Activated CD8-positive, alpha-beta T cell treated with anti-CD3 and anti-CD28 coated beads for 36 hours (primary cell): ENCODE measurements at regions of chr14 and their contacts with region 1.

Region 1: GRCh38 chr14:70073924-70074566 is 114.7 kb downstream of the SLC8A3 start:
- DNase-seq: peak; percentile 75
- ATAC-seq: peak; percentile 45
- H3K4me3 Mint-ChIP-seq: no peak overlapping the region
- H3K27ac Mint-ChIP-seq: no peak overlapping the region
- H3K4me1 Mint-ChIP-seq: no peaks in the 10 kb centered on the region
- H3K27me3 Mint-ChIP-seq: peaks cover 11% of the 10 kb centered on the region
- CTCF ChIP-seq: peak; percentile 84

Region 2: DNA sequence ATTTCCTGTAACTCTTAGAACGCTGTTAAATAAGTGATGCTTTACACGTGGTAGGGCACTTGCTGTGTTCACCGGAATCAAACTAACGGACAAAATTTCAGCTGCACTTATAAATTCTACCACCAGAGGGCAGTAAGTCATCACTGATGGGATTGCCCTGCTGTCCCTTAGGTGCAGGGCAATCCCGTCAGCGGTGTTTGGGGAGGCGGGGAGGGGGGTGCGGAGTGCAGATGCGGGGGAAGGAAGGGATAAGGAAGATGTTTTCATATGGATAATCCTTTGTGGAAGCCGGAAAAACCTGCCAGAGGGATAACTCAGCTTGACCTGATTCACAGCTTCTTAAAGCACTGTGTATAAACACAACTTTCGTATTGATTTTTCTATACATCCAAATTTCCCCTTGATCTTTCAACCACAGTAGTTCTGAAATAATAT is 255.3 kb before region 1 on chr14:
- CTCF ChIA-PET with region 1: interaction called, 21 read pairs
- POLR2A ChIA-PET with region 1: no interaction called
- intact Hi-C with region 1: loop called (anchors 2 kb)
- DNase-seq: peak; percentile 61
- ATAC-seq: peak; percentile 88
- H3K4me3 Mint-ChIP-seq: no peak overlapping the region
- H3K27ac Mint-ChIP-seq: no peak overlapping the region
- H3K4me1 Mint-ChIP-seq: no peaks in the 10 kb centered on the region
- H3K27me3 Mint-ChIP-seq: peaks cover 2% of the 10 kb centered on the region
- CTCF ChIP-seq: peak; percentile 67

Region 3: GRCh38 chr14:69980457-69981425 is 93.3 kb before region 1 on chr14:
- CTCF ChIA-PET with region 1: no interaction called
- POLR2A ChIA-PET with region 1: no interaction called
- intact Hi-C with region 1: no loop called
- DNase-seq: no peak
- ATAC-seq: no peak
- H3K4me3 Mint-ChIP-seq: no peak overlapping the region
- H3K27ac Mint-ChIP-seq: no peak overlapping the region
- H3K4me1 Mint-ChIP-seq: no peaks in the 10 kb centered on the region
- H3K27me3 Mint-ChIP-seq: peaks cover 17% of the 10 kb centered on the region
- CTCF ChIP-seq: no peak

Region 4: GRCh38 chr14:70027785-70028428 is 46.1 kb before region 1 on chr14:
- CTCF ChIA-PET with region 1: interaction called, 14 read pairs
- POLR2A ChIA-PET with region 1: no interaction called
- intact Hi-C with region 1: no loop called
- DNase-seq: peak; percentile 81
- ATAC-seq: peak; percentile 89
- H3K4me3 Mint-ChIP-seq: no peak overlapping the region
- H3K27ac Mint-ChIP-seq: no peak overlapping the region
- H3K4me1 Mint-ChIP-seq: no peaks in the 10 kb centered on the region
- H3K27me3 Mint-ChIP-seq: peaks cover 2% of the 10 kb centered on the region
- CTCF ChIP-seq: peak; percentile 97

Region 5: GRCh38 chr14:70052990-70053389 is 21.1 kb before region 1 on chr14:
- CTCF ChIA-PET with region 1: interaction called, 13 read pairs
- POLR2A ChIA-PET with region 1: no interaction called
- intact Hi-C with region 1: no loop called
- DNase-seq: peak; percentile 49
- ATAC-seq: no peak
- H3K4me3 Mint-ChIP-seq: no peak overlapping the region
- H3K27ac Mint-ChIP-seq: no peak overlapping the region
- H3K4me1 Mint-ChIP-seq: peaks cover 7% of the 10 kb centered on the region
- H3K27me3 Mint-ChIP-seq: peaks cover 4% of the 10 kb centered on the region
- CTCF ChIP-seq: no peak

Region 6: GRCh38 chr14:70084226-70084625 is 10.2 kb after region 1 on chr14:
- CTCF ChIA-PET with region 1: interaction called, 12 read pairs
- POLR2A ChIA-PET with region 1: no interaction called
- intact Hi-C with region 1: no loop called
- DNase-seq: no peak
- ATAC-seq: no peak
- H3K4me3 Mint-ChIP-seq: no peak overlapping the region
- H3K27ac Mint-ChIP-seq: no peak overlapping the region
- H3K4me1 Mint-ChIP-seq: no peaks in the 10 kb centered on the region
- H3K27me3 Mint-ChIP-seq: peaks cover 15% of the 10 kb centered on the region
- CTCF ChIP-seq: no peak